GM10248 (cell line): ENCODE measurements at regions of chr5 and their contacts with region 1.

Region 1: GRCh38 chr5:112921833-112922817 is at the start of gene REEP5:
- DNase-seq: peak; percentile 91
- CTCF ChIP-seq: peak; percentile 93

Region 2: GRCh38 chr5:112263469-112263868 is 658.7 kb before region 1 on chr5:
- CTCF ChIA-PET with region 1: no interaction called
- POLR2A ChIA-PET with region 1: no interaction called
- DNase-seq: no peak
- CTCF ChIP-seq: no peak

Region 3: GRCh38 chr5:112933651-112934365 is 11.7 kb after region 1 on chr5:
- CTCF ChIA-PET with region 1: interaction called, 10 read pairs
- POLR2A ChIA-PET with region 1: no interaction called
- DNase-seq: no peak
- CTCF ChIP-seq: no peak

Region 4: GRCh38 chr5:112976432-112977309 is 54.5 kb after region 1 on chr5 and contains the start of gene DCP2:
- CTCF ChIA-PET with region 1: interaction called, 12 read pairs
- POLR2A ChIA-PET with region 1: interaction called, 3 read pairs
- DNase-seq: peak; percentile 97
- CTCF ChIP-seq: no peak

Region 5: DNA sequence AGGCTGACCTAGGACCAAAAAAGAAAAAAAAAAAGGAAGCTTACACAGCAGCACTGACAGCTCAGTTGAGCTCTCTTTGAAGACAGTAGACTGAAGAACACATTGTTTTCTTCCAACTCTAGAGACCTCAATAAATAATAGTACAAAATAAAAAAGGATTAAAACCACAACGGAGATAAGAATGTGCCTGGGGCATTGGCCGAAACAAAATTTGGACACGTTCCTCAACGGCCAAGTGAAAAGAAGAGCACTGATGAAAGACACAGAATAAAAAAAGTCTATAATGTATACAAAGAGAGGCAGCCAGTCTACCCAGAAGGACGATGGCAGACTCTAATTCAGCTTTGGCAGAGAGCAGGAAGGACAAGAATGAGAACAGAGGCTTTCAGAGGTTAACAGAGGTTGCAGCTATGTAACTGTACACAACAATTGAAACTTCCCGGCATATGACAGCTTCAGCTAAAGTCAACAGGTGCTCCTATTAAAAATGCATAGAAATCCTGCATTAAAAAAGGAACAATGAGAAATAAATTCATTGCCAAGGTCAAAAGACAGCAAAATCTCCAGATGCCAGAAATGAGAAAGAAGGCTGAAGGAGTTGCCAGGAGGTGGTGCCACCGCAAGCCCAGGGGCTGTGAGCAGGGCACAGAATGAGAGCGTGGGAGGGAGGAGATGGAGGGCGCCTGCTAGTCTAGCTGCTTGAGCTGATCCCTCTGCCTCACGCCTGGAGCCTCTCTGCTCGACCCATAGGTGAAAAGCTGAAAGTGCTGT is 168.4 kb after region 1 on chr5:
- CTCF ChIA-PET with region 1: no interaction called
- POLR2A ChIA-PET with region 1: no interaction called
- DNase-seq: no peak
- CTCF ChIP-seq: no peak